ENCODE measurements at regions of chr13 and their contacts with region 1.

Region 1: DNA sequence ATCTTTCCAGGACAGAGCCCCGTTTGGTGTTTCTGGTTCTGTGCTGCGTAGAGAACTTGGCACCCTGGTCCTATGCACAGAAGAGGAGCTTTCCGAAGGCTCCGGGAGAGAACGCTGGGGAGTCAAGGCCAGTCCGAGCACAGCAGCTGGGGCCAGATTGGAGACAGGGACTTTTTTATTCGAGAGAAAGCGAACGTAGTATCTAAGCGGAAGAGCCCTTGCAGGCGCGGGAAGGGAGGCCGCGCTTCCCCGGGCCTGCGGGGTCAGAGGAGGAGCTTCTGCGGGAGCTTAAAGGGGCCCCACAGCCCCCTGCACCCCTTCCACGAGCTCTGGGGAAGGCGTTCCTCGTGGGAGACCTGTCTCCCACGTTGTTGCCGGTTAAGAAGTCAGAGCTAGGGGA is 48.6 kb upstream of the ARHGEF7 start:
- DNase-seq: no peak
- H3K4me3 Mint-ChIP-seq: peak overlapping the region; percentile 71
- H3K27ac Mint-ChIP-seq: no peak overlapping the region
- H3K4me1 Mint-ChIP-seq: no peaks in the 10 kb centered on the region
- H3K27me3 Mint-ChIP-seq: no peaks in the 10 kb centered on the region
- CTCF ChIP-seq: no peak

Region 2: DNA sequence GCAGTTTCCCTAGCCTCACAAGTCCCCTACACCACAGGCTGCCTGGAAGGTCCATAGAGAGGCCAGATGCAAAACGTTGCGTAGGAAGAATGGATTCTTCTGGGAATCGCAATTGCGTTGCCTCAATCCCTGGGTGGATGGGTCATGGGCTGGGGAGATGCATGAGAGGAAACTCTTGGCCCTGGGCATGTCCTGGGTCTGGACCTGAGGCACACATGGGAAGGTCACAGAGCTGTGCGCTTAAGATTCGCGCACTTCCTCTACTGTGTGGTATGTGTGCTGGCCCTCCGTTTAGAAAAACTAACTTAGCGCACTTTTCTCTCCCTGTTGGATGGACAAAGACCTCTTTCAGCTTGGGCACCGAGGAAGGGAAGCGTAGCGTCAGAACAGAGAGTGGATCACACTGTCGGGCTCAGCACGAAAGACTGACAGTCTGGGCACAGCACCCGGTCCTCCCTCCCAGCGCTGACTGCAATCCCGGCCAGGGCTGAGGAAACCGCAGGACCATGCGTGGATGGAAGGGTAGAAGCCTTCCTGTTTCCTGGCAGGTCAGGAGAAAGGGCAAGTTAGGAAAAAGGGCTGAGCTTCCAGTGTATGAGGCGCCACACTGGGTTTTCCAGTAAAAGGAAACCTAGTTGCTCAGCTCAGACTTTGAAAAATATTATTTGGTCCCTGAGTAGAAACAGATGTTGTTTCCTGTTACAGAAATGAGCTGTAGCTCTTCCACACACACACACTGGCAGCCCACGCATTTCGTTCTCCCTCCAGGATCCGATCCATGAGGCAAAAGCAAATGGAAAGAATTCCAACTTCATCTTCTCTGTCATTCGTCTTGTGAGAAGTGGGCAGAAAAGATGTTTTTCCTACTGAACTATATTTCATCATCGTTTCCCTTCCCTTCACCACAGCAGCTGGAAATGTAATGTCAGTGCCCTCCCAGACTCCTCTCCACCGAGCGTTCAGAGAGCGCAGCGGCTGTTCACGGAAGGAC is 267.0 kb before region 1 on chr13:
- CTCF ChIA-PET with region 1: no interaction called
- POLR2A ChIA-PET with region 1: no interaction called
- intact Hi-C with region 1: no loop called
- DNase-seq: no peak
- H3K4me3 Mint-ChIP-seq: no peak overlapping the region
- H3K27ac Mint-ChIP-seq: no peak overlapping the region
- H3K4me1 Mint-ChIP-seq: no peaks in the 10 kb centered on the region
- H3K27me3 Mint-ChIP-seq: peaks cover 50% of the 10 kb centered on the region
- CTCF ChIP-seq: no peak

Region 3: DNA sequence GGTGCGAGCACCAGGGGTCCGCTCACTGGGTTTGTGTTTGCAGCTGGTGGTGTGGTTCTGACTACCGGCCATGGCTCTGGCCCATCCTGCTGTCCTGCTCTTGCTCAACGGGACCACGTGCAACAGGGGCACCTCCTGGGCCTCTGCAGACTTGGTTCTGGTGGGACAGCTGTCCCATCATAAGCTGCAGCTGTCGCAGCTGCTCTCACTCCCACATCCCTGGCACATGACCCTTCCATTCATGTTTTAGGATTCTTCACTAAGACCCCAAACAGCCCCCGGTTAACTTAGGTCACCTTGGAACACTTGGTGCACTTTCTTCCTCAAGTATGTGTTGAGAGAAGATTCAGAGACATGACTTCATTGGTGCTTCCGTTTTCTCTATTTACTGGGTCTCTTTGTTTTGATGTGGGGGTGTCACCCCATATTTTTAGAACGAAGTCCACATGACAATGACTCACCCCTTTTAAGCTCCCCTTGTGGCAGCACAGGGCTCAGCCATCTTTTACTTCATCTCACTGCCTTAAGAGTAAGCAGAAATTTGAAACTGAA is 19.9 kb before region 1 on chr13:
- CTCF ChIA-PET with region 1: interaction called, 33 read pairs
- POLR2A ChIA-PET with region 1: no interaction called
- intact Hi-C with region 1: no loop called
- DNase-seq: no peak
- H3K4me3 Mint-ChIP-seq: no peak overlapping the region
- H3K27ac Mint-ChIP-seq: no peak overlapping the region
- H3K4me1 Mint-ChIP-seq: peaks cover 14% of the 10 kb centered on the region
- H3K27me3 Mint-ChIP-seq: peaks cover 11% of the 10 kb centered on the region
- CTCF ChIP-seq: no peak

Region 4: DNA sequence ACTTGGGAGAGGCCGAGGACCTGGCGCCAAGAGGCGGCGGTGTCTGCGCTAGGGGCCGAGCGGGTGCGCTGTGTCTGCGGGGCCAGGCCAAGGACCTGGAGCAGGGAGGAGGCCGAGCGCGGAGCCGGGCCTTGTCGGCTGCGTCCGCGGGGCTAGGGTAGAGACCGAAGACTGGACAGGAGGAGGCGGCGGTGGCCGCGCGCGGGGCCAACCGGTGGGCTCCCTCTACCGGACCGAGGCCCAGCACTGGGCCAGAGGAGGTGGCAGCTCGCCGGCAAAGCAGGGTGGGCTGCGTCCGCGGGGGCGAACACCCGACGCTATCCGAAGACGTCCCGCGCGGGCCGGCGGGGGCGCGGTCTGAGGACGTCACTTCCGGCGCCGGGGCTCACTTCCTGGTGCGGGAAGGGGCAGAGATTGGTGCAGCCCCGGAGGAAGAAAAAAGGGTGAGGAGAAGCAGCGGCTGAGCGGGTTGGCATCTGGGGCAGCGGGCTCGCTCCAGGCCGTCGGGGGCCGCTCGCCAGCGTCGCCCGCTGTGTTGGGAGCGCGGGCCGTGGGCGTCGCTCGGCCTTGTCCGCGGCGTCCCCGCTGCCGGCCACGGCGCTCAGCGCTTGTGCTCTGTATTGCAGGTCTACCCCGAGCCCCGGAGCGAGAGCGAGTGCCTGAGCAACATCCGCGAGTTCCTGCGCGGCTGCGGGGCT is 86.9 kb after region 1 on chr13:
- CTCF ChIA-PET with region 1: interaction called, 11 read pairs
- POLR2A ChIA-PET with region 1: no interaction called
- intact Hi-C with region 1: no loop called
- DNase-seq: peak; percentile 90
- H3K4me3 Mint-ChIP-seq: peak overlapping the region; percentile 93
- H3K27ac Mint-ChIP-seq: peak overlapping the region; percentile 98
- H3K4me1 Mint-ChIP-seq: peaks cover 11% of the 10 kb centered on the region
- H3K27me3 Mint-ChIP-seq: peaks cover 34% of the 10 kb centered on the region
- CTCF ChIP-seq: peak; percentile 11

Region 5: GRCh38 chr13:111210544-111211469 is 144.3 kb after region 1 on chr13:
- CTCF ChIA-PET with region 1: interaction called, 22 read pairs
- POLR2A ChIA-PET with region 1: no interaction called
- intact Hi-C with region 1: no loop called
- DNase-seq: peak; percentile 23
- H3K4me3 Mint-ChIP-seq: no peak overlapping the region
- H3K27ac Mint-ChIP-seq: peak overlapping the region; percentile 28
- H3K4me1 Mint-ChIP-seq: peaks cover 26% of the 10 kb centered on the region
- H3K27me3 Mint-ChIP-seq: no peaks in the 10 kb centered on the region
- CTCF ChIP-seq: no peak

Region 6: GRCh38 chr13:111228262-111229144 is 162.0 kb after region 1 on chr13:
- CTCF ChIA-PET with region 1: interaction called, 45 read pairs
- POLR2A ChIA-PET with region 1: no interaction called
- intact Hi-C with region 1: loop called (anchors 1 kb)
- DNase-seq: no peak
- H3K4me3 Mint-ChIP-seq: no peak overlapping the region
- H3K27ac Mint-ChIP-seq: no peak overlapping the region
- H3K4me1 Mint-ChIP-seq: no peaks in the 10 kb centered on the region
- H3K27me3 Mint-ChIP-seq: no peaks in the 10 kb centered on the region
- CTCF ChIP-seq: no peak

Measured in MCF 10A (cell line).